ENCODE measurements at regions of chr6 and their contacts with region 1.

Region 1: GRCh38 chr6:85323435-85324040 is 126.3 kb upstream of the NT5E start:
- DNase-seq: peak; percentile 48
- H3K4me3 Mint-ChIP-seq: no peak overlapping the region
- H3K27ac Mint-ChIP-seq: no peak overlapping the region
- H3K4me1 Mint-ChIP-seq: no peaks in the 10 kb centered on the region
- H3K27me3 Mint-ChIP-seq: peaks cover 2% of the 10 kb centered on the region

Region 2: DNA sequence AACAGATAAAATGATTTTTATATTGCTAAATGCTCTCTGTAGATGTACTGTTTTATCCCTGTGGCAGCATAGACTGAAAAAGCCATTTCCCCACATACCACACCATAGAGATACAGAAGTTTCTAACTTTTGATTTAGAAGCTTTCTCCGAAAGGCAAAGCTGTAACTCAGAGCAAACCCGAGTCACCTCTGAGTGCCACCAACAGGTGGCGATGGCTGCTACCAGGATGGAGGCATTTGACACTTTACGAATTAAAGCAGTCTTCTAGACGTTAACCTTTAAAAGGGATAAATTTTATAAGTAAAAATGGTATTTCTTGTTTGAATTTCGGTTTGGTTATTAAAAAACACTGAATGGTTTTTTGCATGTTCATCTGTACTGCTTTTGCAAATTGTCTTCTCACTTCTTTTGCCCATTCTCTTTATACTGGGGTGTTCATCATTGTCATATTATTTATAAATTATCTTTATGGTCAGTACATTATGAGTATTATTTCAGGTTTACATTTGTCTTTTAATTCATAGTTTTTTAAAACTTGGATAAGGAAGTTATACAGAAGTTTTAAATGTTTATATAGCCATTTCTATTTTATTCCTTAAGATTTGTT is 895.1 kb before region 1 on chr6:
- intact Hi-C with region 1: loop called (anchors 2 kb)
- DNase-seq: peak; percentile 8
- H3K4me3 Mint-ChIP-seq: no peak overlapping the region
- H3K27ac Mint-ChIP-seq: no peak overlapping the region
- H3K4me1 Mint-ChIP-seq: no peaks in the 10 kb centered on the region
- H3K27me3 Mint-ChIP-seq: no peaks in the 10 kb centered on the region

Region 3: DNA sequence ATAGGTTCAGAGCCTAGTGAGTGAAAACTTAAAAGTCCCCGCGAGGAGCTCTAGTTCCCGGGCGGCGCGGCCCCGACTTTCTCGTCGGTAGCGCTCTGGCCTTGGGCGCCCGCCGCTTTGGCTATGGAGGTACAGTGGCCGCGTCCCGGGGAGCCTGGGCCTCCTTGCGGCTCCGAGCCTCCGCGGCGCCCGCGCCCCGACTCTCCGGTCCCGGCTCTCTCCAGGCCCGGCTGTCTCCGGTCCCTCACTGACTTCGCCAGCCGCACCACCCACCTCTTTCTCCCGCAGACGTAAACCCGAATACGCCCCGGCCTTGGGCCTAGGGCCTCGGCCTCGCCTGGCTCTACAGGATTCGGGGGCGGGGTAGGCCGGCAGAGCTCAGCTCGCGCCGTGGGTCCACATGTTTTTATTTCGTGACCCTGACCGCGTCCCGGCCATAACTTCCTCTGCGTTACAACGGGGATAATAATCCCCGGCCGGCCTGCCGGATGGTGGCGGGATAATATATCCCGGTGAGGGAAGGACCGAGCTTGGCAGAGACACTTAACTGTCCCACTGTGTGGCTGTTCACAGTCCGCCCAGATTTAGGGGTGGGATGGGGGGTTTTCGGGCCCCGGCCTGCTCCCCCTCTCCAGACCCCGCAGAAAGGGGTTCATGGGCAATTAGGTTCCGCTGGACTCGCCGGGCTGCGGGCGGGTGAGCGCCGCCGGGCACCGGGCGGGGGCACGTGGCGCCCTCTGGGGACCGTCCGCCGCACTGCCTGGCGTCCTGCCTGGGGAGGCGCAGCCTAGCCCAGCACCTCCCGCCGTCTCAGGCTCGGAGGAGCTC is 549.2 kb before region 1 on chr6:
- intact Hi-C with region 1: loop called (anchors 10 kb)
- DNase-seq: no peak
- H3K4me3 Mint-ChIP-seq: no peak overlapping the region
- H3K27ac Mint-ChIP-seq: no peak overlapping the region
- H3K4me1 Mint-ChIP-seq: peaks cover 5% of the 10 kb centered on the region
- H3K27me3 Mint-ChIP-seq: peaks cover 62% of the 10 kb centered on the region

Region 4: GRCh38 chr6:85372188-85372914 is 48.8 kb after region 1 on chr6:
- intact Hi-C with region 1: no loop called
- DNase-seq: no peak
- H3K4me3 Mint-ChIP-seq: no peak overlapping the region
- H3K27ac Mint-ChIP-seq: no peak overlapping the region
- H3K4me1 Mint-ChIP-seq: no peaks in the 10 kb centered on the region
- H3K27me3 Mint-ChIP-seq: peaks cover 2% of the 10 kb centered on the region